Naive thymus-derived CD4-positive, alpha-beta T cell (primary cell): ENCODE measurements at regions of chr1 and their contacts with region 1.

Region 1: DNA sequence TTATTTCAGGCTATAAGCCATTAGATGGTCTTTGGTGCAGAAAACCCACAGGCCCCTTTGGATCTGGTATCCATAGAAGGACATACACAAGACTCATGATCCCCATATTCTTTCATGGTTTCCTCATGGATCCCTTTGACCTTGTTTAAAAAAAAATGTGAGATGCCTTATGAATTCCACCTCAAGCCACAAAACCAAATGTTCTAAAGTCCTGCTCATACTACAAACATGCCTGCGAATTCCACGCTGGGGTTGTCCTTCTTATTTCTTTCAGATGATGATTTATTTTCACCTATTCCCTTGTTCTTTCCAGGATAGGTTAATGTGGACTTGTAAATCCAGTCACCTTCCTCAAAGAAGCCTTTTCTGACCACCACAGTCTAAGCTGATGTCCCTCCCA is 256.9 kb upstream of the DPYD start:
- DNase-seq: no peak
- ATAC-seq: no peak
- H3K4me3 ChIP-seq: no peak overlapping the region
- H3K4me3 Mint-ChIP-seq: no peak overlapping the region
- H3K27ac ChIP-seq: no peak overlapping the region
- H3K27ac Mint-ChIP-seq: no peak overlapping the region
- H3K4me1 ChIP-seq: no peaks in the 10 kb centered on the region
- H3K4me1 Mint-ChIP-seq: no peaks in the 10 kb centered on the region
- H3K27me3 ChIP-seq: no peaks in the 10 kb centered on the region
- H3K27me3 Mint-ChIP-seq: peaks cover 0 to 4% (median 0%) of the 10 kb centered on the region in 5 donors

Region 2: GRCh38 chr1:98232678-98233077 is 54.9 kb after region 1 on chr1:
- CTCF ChIA-PET with region 1: no interaction called
- POLR2A ChIA-PET with region 1: no interaction called
- intact Hi-C with region 1: loop called in 1 of 2 experiments (anchors 10 kb)
- DNase-seq: no peak
- ATAC-seq: no peak
- H3K4me3 ChIP-seq: no peak overlapping the region
- H3K4me3 Mint-ChIP-seq: no peak overlapping the region
- H3K27ac ChIP-seq: no peak overlapping the region
- H3K27ac Mint-ChIP-seq: no peak overlapping the region
- H3K4me1 ChIP-seq: peaks cover 0 to 5% of the 10 kb centered on the region in 2 donors
- H3K4me1 Mint-ChIP-seq: peaks cover 0 to 3% (median 0%) of the 10 kb centered on the region in 7 donors
- H3K27me3 ChIP-seq: no peaks in the 10 kb centered on the region
- H3K27me3 Mint-ChIP-seq: no peaks in the 10 kb centered on the region

Region 3: DNA sequence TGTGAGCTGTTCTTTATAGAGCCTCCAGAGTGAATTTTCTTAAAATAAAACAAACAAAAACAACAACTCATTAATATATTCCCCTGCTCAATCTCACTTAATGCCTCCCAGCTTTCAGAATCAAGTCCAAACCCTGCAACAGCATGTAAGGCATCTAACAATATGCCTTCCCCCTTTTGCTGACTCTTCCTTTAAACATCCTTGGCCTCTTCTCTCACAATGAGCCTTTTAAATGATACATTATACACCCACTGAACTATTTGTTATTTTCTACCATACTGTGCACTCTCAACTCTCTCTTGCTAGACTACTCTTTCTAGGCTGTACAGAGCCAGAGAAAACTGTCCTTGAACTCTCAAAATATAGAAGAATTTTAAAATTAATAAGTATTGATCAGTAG is 368.6 kb after region 1 on chr1:
- CTCF ChIA-PET with region 1: no interaction called
- POLR2A ChIA-PET with region 1: no interaction called
- intact Hi-C with region 1: no loop called
- DNase-seq: no peak
- ATAC-seq: no peak
- H3K4me3 ChIP-seq: no peak overlapping the region
- H3K4me3 Mint-ChIP-seq: no peak overlapping the region
- H3K27ac ChIP-seq: no peak overlapping the region
- H3K27ac Mint-ChIP-seq: no peak overlapping the region
- H3K4me1 ChIP-seq: no peaks in the 10 kb centered on the region
- H3K4me1 Mint-ChIP-seq: no peaks in the 10 kb centered on the region
- H3K27me3 ChIP-seq: no peaks in the 10 kb centered on the region
- H3K27me3 Mint-ChIP-seq: peaks cover 0 to 4% (median 0%) of the 10 kb centered on the region in 5 donors